Esophagus squamous epithelium (tissue), 5 donors: ENCODE measurements at regions of chr14 and their contacts with region 1.

Region 1: GRCh38 chr14:101774006-101774795 is 12.7 kb downstream of the PPP2R5C start:
- DNase-seq: no peak
- H3K4me3 ChIP-seq: no peak overlapping the region
- H3K27ac ChIP-seq: no peak overlapping the region
- H3K4me1 ChIP-seq: peaks cover 0 to 8% (median 2%) of the 10 kb centered on the region in 3 donors
- H3K27me3 ChIP-seq: no peaks in the 10 kb centered on the region
- CTCF ChIP-seq: no peak
- POLR2A ChIP-seq: no peak

Region 2: GRCh38 chr14:101628471-101628966 is 145.7 kb before region 1 on chr14:
- intact Hi-C with region 1: no loop called
- DNase-seq: no peak
- H3K4me3 ChIP-seq: peak overlapping the region in 3 of 4 donors; percentile 13 to 53 (median 33)
- H3K27ac ChIP-seq: no peak overlapping the region
- H3K4me1 ChIP-seq: peaks cover 0 to 15% (median 7%) of the 10 kb centered on the region in 3 donors
- H3K27me3 ChIP-seq: peaks cover 0 to 4% (median 0%) of the 10 kb centered on the region in 4 donors
- CTCF ChIP-seq: peak; percentile 96 to 99 (median 98)
- POLR2A ChIP-seq: no peak

Region 3: GRCh38 chr14:101953151-101953550 is 178.9 kb after region 1 on chr14:
- intact Hi-C with region 1: loop called (anchors 10 kb)
- DNase-seq: no peak
- H3K4me3 ChIP-seq: no peak overlapping the region
- H3K27ac ChIP-seq: no peak overlapping the region
- H3K4me1 ChIP-seq: peaks cover 10 to 22% (median 10%) of the 10 kb centered on the region in 3 donors
- H3K27me3 ChIP-seq: no peaks in the 10 kb centered on the region
- CTCF ChIP-seq: no peak
- POLR2A ChIP-seq: no peak